PC-9 (cell line): ENCODE measurements at regions of chr7 and their contacts with region 1.

Region 1: GRCh38 chr7:27560540-27561235 is 102.0 kb downstream of the HIBADH start:
- DNase-seq: no peak
- H3K4me3 ChIP-seq: no peak overlapping the region
- H3K27ac ChIP-seq: no peak overlapping the region
- H3K4me1 ChIP-seq: no peaks in the 10 kb centered on the region
- H3K27me3 ChIP-seq: no peaks in the 10 kb centered on the region
- CTCF ChIP-seq: no peak

Region 2: GRCh38 chr7:27802999-27803398 is 242.3 kb after region 1 on chr7:
- CTCF ChIA-PET with region 1: interaction called, 13 read pairs
- POLR2A ChIA-PET with region 1: no interaction called
- intact Hi-C with region 1: no loop called
- DNase-seq: no peak
- H3K4me3 ChIP-seq: no peak overlapping the region
- H3K27ac ChIP-seq: no peak overlapping the region
- H3K4me1 ChIP-seq: no peaks in the 10 kb centered on the region
- H3K27me3 ChIP-seq: no peaks in the 10 kb centered on the region
- CTCF ChIP-seq: no peak

Region 3: GRCh38 chr7:28762651-28763050 is 1202.0 kb after region 1 on chr7:
- CTCF ChIA-PET with region 1: no interaction called
- POLR2A ChIA-PET with region 1: interaction called, 25 read pairs
- intact Hi-C with region 1: no loop called
- DNase-seq: no peak
- H3K4me3 ChIP-seq: no peak overlapping the region
- H3K27ac ChIP-seq: no peak overlapping the region
- H3K4me1 ChIP-seq: no peaks in the 10 kb centered on the region
- H3K27me3 ChIP-seq: no peaks in the 10 kb centered on the region
- CTCF ChIP-seq: no peak